Aorta (tissue), 5 donors: ENCODE measurements at regions of chr2 and their contacts with region 1.

Region 1: GRCh38 chr2:43391878-43392215 is 165.4 kb upstream of the ZFP36L2 start:
- DNase-seq: no peak
- ATAC-seq: peak; percentile 23
- H3K4me3 ChIP-seq: no peak overlapping the region
- H3K27ac ChIP-seq: peak overlapping the region in 1 of 2 donors; percentile 98
- H3K4me1 ChIP-seq: peaks cover 3 to 13% of the 10 kb centered on the region in 2 donors
- H3K27me3 ChIP-seq: no peaks in the 10 kb centered on the region

Region 2: GRCh38 chr2:43312755-43313641 is 78.8 kb before region 1 on chr2:
- intact Hi-C with region 1: loop called in 1 of 2 experiments (anchors 5 kb)
- DNase-seq: no peak
- ATAC-seq: peak; percentile 80
- H3K4me3 ChIP-seq: no peak overlapping the region
- H3K27ac ChIP-seq: peak overlapping the region; percentile 51 to 99
- H3K4me1 ChIP-seq: peaks cover 2 to 7% of the 10 kb centered on the region in 2 donors
- H3K27me3 ChIP-seq: no peaks in the 10 kb centered on the region

Region 3: DNA sequence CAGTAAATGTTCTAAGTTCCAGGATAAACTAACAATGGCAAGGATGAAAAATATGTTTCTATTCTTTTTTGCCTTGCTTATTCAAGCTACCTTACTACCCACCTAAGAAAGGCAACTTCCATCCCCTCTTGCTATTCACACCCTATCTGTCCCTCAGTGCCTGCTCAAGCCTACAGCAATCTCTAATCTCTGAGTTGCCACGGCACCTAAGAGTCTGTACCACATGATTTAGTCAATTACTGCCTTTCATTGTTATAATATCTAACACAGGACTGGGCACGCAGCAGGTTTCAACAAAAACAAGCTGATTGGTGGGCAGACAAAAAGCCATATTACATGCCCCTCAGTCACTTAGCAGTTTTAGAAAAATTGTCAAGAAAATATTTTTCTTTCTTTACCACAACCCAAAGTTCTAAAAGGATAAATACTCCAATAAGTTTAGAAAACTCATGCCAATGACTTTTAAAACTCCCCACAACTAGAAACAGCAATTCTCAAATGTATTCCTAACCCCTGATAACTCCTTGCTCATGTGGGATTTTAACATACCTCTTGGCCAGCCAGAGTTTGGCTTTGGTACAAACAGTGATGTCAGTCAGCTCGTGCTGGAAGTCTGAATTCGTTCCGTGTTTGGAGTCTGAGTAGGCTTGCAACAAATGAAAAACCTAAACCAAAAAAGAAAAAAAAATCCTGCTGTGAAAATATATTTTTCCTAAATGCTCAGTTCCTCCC is 48.1 kb before region 1 on chr2:
- intact Hi-C with region 1: loop called in 1 of 2 experiments (anchors 2 kb)
- DNase-seq: peak; percentile 86
- ATAC-seq: peak; percentile 80
- H3K4me3 ChIP-seq: no peak overlapping the region
- H3K27ac ChIP-seq: peak overlapping the region; percentile 95 to 99
- H3K4me1 ChIP-seq: peaks cover 15 to 19% of the 10 kb centered on the region in 2 donors
- H3K27me3 ChIP-seq: no peaks in the 10 kb centered on the region